ENCODE measurements at regions of chr12 and their contacts with region 1.

Region 1: DNA sequence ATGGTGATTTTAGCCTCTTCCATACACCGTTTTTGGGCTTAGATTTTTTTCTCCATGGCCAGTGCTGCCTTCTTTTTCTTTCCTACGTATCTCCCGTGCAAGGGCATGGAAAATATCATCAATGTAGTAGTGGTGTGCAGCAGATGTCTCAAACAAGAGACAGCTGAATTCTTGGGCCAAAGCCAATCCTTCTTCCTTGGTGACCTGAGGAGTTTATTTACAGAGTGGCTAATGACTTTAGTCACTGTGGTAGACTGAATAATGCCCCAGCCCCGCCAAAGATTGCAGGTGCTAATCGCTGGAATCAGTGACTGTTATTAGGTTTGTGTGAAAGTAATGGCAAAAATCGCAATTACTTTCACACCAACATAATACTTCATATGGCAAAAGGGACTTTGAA is 235.5 kb upstream of the NOS1 start:
- DNase-seq: no peak
- ATAC-seq: no peak
- H3K4me3 ChIP-seq: no peak overlapping the region
- H3K27ac ChIP-seq: no peak overlapping the region
- H3K4me1 ChIP-seq: no peaks in the 10 kb centered on the region
- H3K27me3 ChIP-seq: no peaks in the 10 kb centered on the region
- CTCF ChIP-seq: no peak
- POLR2A ChIP-seq: no peak

Region 2: GRCh38 chr12:117228239-117228638 is 368.7 kb before region 1 on chr12:
- intact Hi-C with region 1: loop called (anchors 10 kb)
- DNase-seq: no peak
- ATAC-seq: no peak
- H3K4me3 ChIP-seq: no peak overlapping the region
- H3K27ac ChIP-seq: no peak overlapping the region
- H3K4me1 ChIP-seq: no peaks in the 10 kb centered on the region
- H3K27me3 ChIP-seq: no peaks in the 10 kb centered on the region
- CTCF ChIP-seq: no peak
- POLR2A ChIP-seq: no peak

Region 3: GRCh38 chr12:117643971-117644370 is 47.0 kb after region 1 on chr12:
- intact Hi-C with region 1: no loop called
- DNase-seq: no peak
- ATAC-seq: no peak
- H3K4me3 ChIP-seq: no peak overlapping the region
- H3K27ac ChIP-seq: no peak overlapping the region
- H3K4me1 ChIP-seq: no peaks in the 10 kb centered on the region
- H3K27me3 ChIP-seq: no peaks in the 10 kb centered on the region
- CTCF ChIP-seq: no peak
- POLR2A ChIP-seq: no peak